AG04449 (cell line): ENCODE measurements at regions of chr10 and their contacts with region 1.

Region 1: DNA sequence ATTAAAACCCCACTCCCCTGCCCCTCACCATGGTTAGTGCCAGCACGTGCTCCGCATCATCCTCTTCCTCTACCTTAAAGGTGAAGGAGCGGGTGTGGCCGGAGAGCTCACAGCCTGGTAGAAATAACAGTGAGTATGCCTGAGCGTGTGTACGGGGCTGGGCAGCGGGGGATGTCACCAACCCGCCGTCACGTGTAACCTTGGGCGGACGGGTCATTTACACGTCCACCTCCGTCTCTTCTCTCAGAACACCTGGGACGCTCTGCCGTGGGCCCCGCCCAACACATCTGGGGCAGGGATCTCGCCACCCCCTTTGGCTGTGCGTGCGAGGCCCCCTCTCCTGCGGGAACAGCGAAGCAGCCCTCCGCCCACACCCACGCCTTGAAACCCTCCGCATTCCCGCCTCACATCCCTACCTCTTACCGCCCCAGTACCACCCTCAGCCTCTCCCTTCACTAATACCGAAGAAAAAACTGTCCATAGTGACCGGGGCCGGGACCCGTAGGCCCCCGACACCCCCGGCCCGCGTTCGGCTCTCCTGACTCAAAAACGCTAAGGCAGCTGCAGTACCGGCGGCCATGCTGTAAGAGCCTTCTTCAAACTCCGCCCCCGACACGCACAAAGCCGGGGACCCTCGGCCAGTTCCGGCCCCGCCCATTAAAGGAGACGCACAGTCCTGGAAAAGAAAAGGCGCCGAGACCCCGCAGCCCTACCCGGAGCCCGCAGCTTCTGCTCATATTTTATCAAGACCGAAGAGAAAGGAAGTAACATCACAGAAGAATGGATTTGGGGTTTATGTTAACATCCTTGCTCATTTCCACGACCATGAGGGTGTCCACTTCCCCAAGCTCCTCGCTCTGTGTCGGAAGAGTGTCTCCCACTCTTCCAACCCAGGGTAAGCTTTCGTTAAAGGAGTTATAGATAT is at the start of gene NPM3:
- DNase-seq: no peak
- H3K4me3 ChIP-seq: peak within 1 kb of the TSS; percentile 84
- CTCF ChIP-seq: no peak

Region 2: DNA sequence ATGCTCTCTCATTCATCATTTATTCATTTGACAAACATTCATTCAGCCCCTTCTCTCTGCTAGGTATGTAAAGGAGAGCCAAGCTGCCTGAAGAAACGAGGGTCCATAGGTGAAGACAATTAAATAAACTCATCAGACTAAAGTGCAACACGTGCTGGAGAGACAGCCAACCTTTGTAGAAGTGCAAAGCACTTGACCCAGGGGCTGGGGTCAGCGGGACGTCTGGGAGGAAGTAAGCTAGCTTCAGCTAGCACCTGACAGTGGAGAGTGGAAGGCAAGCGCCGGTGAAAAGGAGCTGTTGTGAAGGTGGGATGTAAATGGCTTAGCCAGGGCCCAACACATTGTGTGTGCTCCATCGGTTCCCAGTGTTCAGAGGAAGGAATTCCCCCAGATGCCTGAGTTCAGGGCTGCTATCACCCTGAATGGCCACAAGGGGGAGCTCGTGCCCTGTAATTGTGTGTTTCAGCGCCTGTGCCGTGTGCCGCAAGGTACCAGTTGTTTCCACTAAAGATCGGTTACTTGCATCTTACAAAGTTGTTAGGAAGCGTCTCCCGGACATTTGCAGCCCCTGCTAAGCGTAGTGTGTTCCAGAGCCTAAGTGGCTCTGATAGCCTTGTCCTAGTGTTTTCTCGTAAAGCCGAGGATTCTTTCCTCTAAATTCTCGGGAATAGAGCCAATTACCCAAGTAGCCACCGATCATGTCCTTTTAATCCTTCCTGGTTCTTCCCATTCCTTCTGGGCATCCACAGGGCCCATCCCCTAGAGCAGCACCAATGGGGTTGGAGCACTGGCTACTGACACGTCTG is 621.4 kb before region 1 on chr10:
- CTCF ChIA-PET with region 1: interaction called, 19 read pairs
- POLR2A ChIA-PET with region 1: no interaction called
- DNase-seq: no peak
- H3K4me3 ChIP-seq: peak overlapping the region; percentile 51
- CTCF ChIP-seq: peak; percentile 94

Region 3: GRCh38 chr10:101602761-101603398 is 180.2 kb before region 1 on chr10:
- CTCF ChIA-PET with region 1: interaction called, 265 read pairs
- POLR2A ChIA-PET with region 1: no interaction called
- DNase-seq: no peak
- H3K4me3 ChIP-seq: no peak overlapping the region
- CTCF ChIP-seq: peak; percentile 95

Region 4: GRCh38 chr10:101769541-101770180 is 13.4 kb before region 1 on chr10:
- CTCF ChIA-PET with region 1: interaction called, 54 read pairs
- POLR2A ChIA-PET with region 1: no interaction called
- DNase-seq: no peak
- H3K4me3 ChIP-seq: no peak overlapping the region
- CTCF ChIP-seq: no peak

Region 5: GRCh38 chr10:101818119-101818871 is 35.2 kb after region 1 on chr10 and contains the start of gene OGA:
- CTCF ChIA-PET with region 1: interaction called, 15 read pairs
- POLR2A ChIA-PET with region 1: interaction called, 3 read pairs
- DNase-seq: peak; percentile 100
- H3K4me3 ChIP-seq: peak within 1 kb of the TSS; percentile 99
- CTCF ChIP-seq: no peak